ENCODE measurements at regions of chr1 and their contacts with region 1.

Region 1: GRCh38 chr1:180533266-180533987 is 25.3 kb upstream of the OVAAL start:
- DNase-seq: peak; percentile 86

Region 2: DNA sequence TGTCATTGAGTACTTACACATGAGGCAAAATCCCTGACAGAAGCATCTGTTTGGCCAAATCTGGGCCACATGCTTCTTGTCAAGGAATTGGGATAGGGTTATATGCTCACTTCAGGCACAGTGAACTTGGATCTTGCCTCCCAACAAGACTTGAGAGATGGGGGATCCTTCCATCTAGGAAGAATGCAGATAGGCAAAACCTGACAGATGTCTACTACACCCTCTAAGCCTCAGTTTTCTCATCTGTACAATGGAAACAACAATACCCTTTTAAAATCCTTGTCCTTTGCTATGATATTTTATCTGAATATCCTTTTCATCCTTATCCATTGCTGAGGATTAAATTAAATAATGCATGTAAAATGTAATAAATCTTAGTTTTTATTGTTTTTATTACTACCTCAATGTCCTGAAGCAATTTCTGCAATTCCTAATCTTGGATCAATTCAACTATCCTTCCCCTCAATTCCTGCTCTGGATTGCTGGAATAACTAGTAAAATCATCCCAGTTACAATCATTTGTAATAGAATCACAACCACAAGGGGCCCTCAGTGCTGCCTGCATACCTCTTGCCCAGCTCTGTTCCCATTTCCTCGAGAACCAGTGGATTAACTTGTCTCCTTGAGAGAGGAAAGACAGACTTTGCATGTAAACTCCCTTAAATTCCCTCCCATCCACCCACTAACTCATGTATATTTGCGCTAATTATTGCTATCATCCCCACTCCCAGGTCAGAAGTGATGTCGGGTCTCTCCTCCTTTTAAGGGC is 90.3 kb after region 1 on chr1:
- intact Hi-C with region 1: loop called in 1 of 2 experiments (anchors 10 kb)
- DNase-seq: no peak

Region 3: DNA sequence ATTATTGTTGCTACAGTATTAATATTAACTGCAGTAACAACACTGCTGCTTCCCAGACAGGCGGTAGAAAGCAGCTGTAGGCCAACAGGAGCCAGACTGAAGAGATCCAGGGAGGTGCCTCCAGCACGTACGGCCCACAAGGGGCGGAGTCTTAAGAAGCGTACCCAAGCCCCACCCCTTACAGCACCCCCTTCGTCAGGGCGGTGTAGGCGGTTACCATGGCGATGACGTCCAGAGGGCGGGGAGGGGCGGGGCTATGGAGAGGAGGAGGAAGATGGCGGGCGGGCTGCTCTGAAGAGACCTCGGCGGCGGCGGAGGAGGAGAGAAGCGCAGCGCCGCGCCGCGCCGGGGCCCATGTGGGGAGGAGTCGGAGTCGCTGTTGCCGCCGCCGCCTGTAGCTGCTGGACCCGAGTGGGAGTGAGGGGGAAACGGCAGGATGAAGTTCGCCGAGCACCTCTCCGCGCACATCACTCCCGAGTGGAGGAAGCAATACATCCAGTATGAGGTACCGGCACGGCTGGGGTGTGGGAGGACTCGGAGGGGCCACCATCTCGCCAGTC is 98.4 kb after region 1 on chr1 and contains the start of gene XPR1:
- intact Hi-C with region 1: loop called (anchors 10 kb)
- DNase-seq: peak; percentile 99
- total RNA-seq, gene XPR1: 14.9 to 38.3 TPM

Region 4: GRCh38 chr1:180863158-180863775 is 329.8 kb after region 1 on chr1:
- intact Hi-C with region 1: loop called (anchors 5 kb)
- DNase-seq: no peak

Measured in posterior vena cava (tissue), 2 donors.